Heart right ventricle (tissue), 16 donors: ENCODE measurements at regions of chr3 and their contacts with region 1.

Region 1: DNA sequence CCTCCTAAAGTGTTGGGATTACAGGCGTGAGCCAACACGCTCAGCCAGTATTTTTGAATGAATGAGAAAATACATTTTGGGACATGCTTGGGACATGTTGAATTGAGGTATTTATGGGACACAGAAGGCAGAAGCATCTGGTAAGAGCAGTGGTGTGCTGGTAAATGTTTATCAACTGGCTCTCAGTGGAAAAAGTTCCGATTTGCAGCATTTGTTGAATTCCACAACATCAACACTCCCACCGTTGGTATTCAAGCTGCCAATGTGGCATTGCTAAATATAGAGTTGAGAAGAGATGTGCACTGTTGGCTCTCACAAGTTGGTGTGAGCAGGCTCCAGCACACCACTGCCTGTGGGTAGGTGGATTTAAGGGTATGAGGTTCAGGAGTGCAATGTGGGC is 35.8 kb upstream of the LRRFIP2 start:
- DNase-seq: no peak
- ATAC-seq: peak in 6 of 8 donors; percentile 18 to 72 (median 62)
- H3K4me3 ChIP-seq: no peak overlapping the region
- H3K27ac ChIP-seq: peak overlapping the region in 5 of 10 donors; percentile 14 to 62 (median 39)
- H3K4me1 ChIP-seq: peaks cover 0 to 14% (median 4%) of the 10 kb centered on the region in 9 donors
- H3K27me3 ChIP-seq: no peaks in the 10 kb centered on the region
- CTCF ChIP-seq: no peak

Region 2: DNA sequence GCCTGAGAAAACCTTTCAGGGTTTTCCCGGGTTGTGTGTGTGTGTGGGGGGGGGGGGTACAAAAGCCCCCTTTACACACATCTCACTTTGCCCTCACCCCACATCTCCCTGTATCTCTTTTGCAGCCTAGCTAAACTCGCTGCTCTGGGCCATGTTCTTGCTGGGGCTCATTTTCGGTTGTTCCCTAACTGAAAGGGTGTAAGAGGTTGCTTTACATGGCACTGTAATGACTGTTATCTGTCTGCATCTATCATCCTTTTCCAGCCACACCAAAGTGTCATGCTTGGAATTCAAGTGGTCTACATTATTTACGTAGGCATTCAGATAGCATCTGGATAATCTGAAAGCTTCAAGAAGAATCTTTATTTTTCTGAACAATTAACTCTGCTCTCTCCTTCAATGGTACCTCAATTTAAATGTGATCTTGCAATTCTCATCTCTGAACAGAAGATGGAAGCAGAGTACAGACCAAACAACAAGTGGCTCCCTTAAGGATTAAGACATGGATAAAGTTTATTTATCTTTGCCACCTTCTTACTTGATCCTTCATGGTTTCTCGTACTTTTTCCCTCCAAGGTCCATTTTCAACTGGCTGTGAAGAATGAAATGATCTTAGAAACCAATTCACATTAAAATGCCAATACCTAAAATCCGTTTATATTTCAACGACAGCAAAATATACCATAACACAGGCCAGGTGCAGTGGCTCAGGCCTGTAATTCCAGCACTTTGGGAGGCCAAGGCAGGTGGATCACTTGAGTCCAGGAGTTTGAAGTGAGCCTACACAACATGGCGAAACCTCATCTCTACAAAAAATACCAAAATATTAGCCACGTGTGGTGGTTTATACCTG is 480.8 kb before region 1 on chr3:
- intact Hi-C with region 1: loop called in 1 of 10 experiments (anchors 10 kb)
- DNase-seq: no peak
- ATAC-seq: peak in 6 of 8 donors; percentile 47 to 65 (median 56)
- H3K4me3 ChIP-seq: no peak overlapping the region
- H3K27ac ChIP-seq: no peak overlapping the region
- H3K4me1 ChIP-seq: peaks cover 0 to 22% (median 14%) of the 10 kb centered on the region in 9 donors
- H3K27me3 ChIP-seq: no peaks in the 10 kb centered on the region
- CTCF ChIP-seq: peak; percentile 59 to 88 (median 75)

Region 3: GRCh38 chr3:36911990-36912804 is 298.0 kb before region 1 on chr3:
- intact Hi-C with region 1: loop called in 2 of 10 experiments (anchors 10 kb)
- DNase-seq: no peak
- ATAC-seq: peak in 2 of 8 donors; percentile 34 to 36
- H3K4me3 ChIP-seq: no peak overlapping the region
- H3K27ac ChIP-seq: peak overlapping the region in 3 of 10 donors; percentile 27 to 79 (median 33)
- H3K4me1 ChIP-seq: peaks cover 4 to 41% (median 16%) of the 10 kb centered on the region in 9 donors
- H3K27me3 ChIP-seq: no peaks in the 10 kb centered on the region
- CTCF ChIP-seq: no peak

Region 4: GRCh38 chr3:36993326-36994283 is 216.6 kb before region 1 on chr3 and contains the start of gene MLH1:
- intact Hi-C with region 1: loop called in 2 of 10 experiments (anchors 1 to 10 kb)
- DNase-seq: peak; percentile 95 to 100
- ATAC-seq: peak; percentile 95 to 97 (median 96)
- H3K4me3 ChIP-seq: peak within 1 kb of the TSS; percentile 55 to 87 (median 72)
- H3K27ac ChIP-seq: peak within 1 kb of the TSS; percentile 89 to 99 (median 98)
- H3K4me1 ChIP-seq: peaks cover 2 to 64% (median 51%) of the 10 kb centered on the region in 9 donors
- H3K27me3 ChIP-seq: no peaks in the 10 kb centered on the region
- CTCF ChIP-seq: no peak
- total RNA-seq, gene MLH1: 48.8 to 61.7 (median 52.5) TPM

Region 5: DNA sequence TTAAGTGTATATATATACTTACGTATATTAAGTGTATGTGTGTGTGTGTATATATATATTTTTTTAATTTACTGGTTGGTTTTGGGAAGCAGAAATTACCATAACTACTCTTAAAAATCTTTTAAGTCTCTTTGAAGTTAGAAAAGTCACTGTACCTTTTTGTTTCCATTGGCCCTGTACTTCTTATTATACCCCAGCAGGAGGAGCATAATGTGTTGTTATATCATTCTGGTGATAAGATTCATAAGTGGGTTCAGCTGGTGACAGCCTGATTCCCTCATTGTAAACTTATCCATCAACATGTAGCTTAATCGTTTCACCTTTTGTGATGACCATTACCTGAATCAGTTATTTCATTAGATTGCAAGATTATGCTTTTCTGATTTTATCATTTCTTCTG is 186.1 kb before region 1 on chr3:
- intact Hi-C with region 1: loop called (anchors 5 to 10 kb)
- DNase-seq: no peak
- ATAC-seq: no peak
- H3K4me3 ChIP-seq: no peak overlapping the region
- H3K27ac ChIP-seq: peak overlapping the region in 5 of 10 donors; percentile 2 to 80 (median 19)
- H3K4me1 ChIP-seq: peaks cover 5 to 46% (median 28%) of the 10 kb centered on the region in 9 donors
- H3K27me3 ChIP-seq: no peaks in the 10 kb centered on the region
- CTCF ChIP-seq: peak in 7 of 9 donors; percentile 43 to 61 (median 52)

Region 6: GRCh38 chr3:37054370-37054769 is 155.9 kb before region 1 on chr3:
- intact Hi-C with region 1: loop called in 1 of 10 experiments (anchors 10 kb)
- DNase-seq: peak in 1 of 2 donors; percentile 42
- ATAC-seq: peak; percentile 86 to 94 (median 92)
- H3K4me3 ChIP-seq: peak overlapping the region in 3 of 10 donors; percentile 4 to 16 (median 11)
- H3K27ac ChIP-seq: peak overlapping the region; percentile 66 to 92 (median 84)
- H3K4me1 ChIP-seq: peaks cover 21 to 70% (median 50%) of the 10 kb centered on the region in 9 donors
- H3K27me3 ChIP-seq: no peaks in the 10 kb centered on the region
- CTCF ChIP-seq: no peak

Region 7: GRCh38 chr3:37096288-37096687 is 113.9 kb before region 1 on chr3:
- intact Hi-C with region 1: loop called in 1 of 10 experiments (anchors 10 kb)
- DNase-seq: no peak
- ATAC-seq: peak in 6 of 8 donors; percentile 40 to 69 (median 60)
- H3K4me3 ChIP-seq: no peak overlapping the region
- H3K27ac ChIP-seq: peak overlapping the region in 8 of 10 donors; percentile 41 to 76 (median 48)
- H3K4me1 ChIP-seq: peaks cover 0 to 34% (median 19%) of the 10 kb centered on the region in 9 donors
- H3K27me3 ChIP-seq: no peaks in the 10 kb centered on the region
- CTCF ChIP-seq: no peak

Region 8: GRCh38 chr3:37129871-37130270 is 80.4 kb before region 1 on chr3:
- intact Hi-C with region 1: no loop called
- DNase-seq: no peak
- ATAC-seq: no peak
- H3K4me3 ChIP-seq: no peak overlapping the region
- H3K27ac ChIP-seq: no peak overlapping the region
- H3K4me1 ChIP-seq: peaks cover 0 to 57% (median 42%) of the 10 kb centered on the region in 9 donors
- H3K27me3 ChIP-seq: no peaks in the 10 kb centered on the region
- CTCF ChIP-seq: no peak

Region 9: GRCh38 chr3:37628711-37629301 is 418.6 kb after region 1 on chr3:
- intact Hi-C with region 1: no loop called
- DNase-seq: no peak
- ATAC-seq: no peak
- H3K4me3 ChIP-seq: no peak overlapping the region
- H3K27ac ChIP-seq: no peak overlapping the region
- H3K4me1 ChIP-seq: peaks cover 9 to 43% (median 35%) of the 10 kb centered on the region in 9 donors
- H3K27me3 ChIP-seq: no peaks in the 10 kb centered on the region
- CTCF ChIP-seq: no peak